PC-3 (cell line): ENCODE measurements at regions of chr6 and their contacts with region 1.

Region 1: DNA sequence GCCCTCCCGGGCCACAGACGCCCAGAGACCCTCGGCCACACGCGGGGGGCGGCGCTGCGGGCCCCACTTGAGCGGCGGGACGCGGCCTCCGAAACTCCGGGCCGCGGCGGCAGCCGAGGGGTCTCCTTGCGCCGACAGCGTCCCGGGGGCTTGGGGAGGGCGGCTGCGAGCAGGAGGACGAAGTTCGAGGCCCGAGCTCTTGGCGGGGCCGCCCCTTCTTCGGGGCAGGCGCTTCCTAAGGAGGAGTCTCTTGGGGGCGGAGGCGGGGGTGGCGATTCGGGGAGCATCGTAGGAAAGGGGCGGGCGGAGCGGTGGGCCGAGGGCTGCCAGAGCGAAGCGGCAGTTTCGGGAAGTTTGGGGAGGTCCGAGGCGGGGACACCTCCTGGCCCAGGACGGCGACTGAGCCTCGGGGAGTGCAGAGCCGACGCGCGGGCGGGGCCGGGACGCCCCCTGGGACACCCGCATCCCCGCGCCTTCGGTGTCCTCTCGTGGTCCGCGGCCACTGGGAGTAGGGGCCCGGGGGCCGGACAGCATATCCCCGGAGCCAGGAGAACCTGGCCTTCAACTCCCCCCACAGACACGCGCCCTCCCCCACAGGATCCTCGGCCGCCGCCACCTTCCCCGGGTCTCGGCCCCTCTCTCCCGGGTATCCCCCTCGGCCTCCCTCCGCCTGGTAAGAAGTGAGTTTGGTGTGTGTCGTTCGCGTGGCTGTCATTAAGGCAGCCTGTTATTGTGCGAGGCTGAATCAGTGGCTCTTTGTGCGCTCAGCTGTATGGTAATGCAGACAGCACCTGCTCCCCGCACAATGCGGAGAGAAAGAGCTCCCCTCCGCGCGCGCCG is 613 bp upstream of the DLL1 start:
- DNase-seq: peak; percentile 27
- ATAC-seq: peak; percentile 33
- H3K4me3 ChIP-seq: peak overlapping the region; percentile 61
- H3K27ac ChIP-seq: no peak overlapping the region
- H3K4me1 ChIP-seq: peaks cover 10% of the 10 kb centered on the region
- H3K27me3 ChIP-seq: peaks cover 50% of the 10 kb centered on the region
- CTCF ChIP-seq: no peak

Region 2: GRCh38 chr6:169789982-169790927 is 501.2 kb before region 1 on chr6:
- CTCF ChIA-PET with region 1: no interaction called
- POLR2A ChIA-PET with region 1: no interaction called
- intact Hi-C with region 1: loop called (anchors 5 kb)
- DNase-seq: peak; percentile 65
- ATAC-seq: peak; percentile 96
- H3K4me3 ChIP-seq: peak overlapping the region; percentile 75
- H3K27ac ChIP-seq: no peak overlapping the region
- H3K4me1 ChIP-seq: peaks cover 14% of the 10 kb centered on the region; the same call in 1 of the 2 replicates
- H3K27me3 ChIP-seq: no peaks in the 10 kb centered on the region
- CTCF ChIP-seq: peak; percentile 89

Region 3: GRCh38 chr6:169831450-169832246 is 459.8 kb before region 1 on chr6:
- CTCF ChIA-PET with region 1: interaction called, 12 read pairs
- POLR2A ChIA-PET with region 1: no interaction called
- intact Hi-C with region 1: loop called (anchors 1 kb)
- DNase-seq: peak; percentile 71
- ATAC-seq: peak; percentile 95
- H3K4me3 ChIP-seq: peak overlapping the region; percentile 39
- H3K27ac ChIP-seq: no peak overlapping the region
- H3K4me1 ChIP-seq: peaks cover 13% of the 10 kb centered on the region; the same call in 1 of the 2 replicates
- H3K27me3 ChIP-seq: peaks cover 6% of the 10 kb centered on the region; the same call in 1 of the 2 replicates
- CTCF ChIP-seq: peak; percentile 88

Region 4: DNA sequence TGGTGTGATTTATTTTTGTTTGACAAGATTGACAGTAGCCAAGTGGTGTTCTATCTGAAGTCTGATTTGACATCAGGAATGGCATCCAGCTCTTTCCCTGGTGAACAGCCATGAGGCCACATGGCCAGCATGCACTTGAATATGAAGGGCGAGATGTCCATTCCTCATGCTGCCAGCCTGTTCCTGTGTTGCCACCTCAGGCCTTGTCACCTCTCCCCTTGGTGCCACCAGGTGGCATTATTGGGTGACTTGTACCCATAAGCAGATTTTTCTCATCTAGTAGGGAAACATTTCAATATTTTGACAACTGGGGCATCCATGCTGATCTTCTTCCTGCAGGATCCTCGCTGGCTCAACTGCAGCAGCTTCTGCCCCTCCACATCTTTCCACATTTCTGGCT is 340.9 kb before region 1 on chr6:
- CTCF ChIA-PET with region 1: no interaction called
- POLR2A ChIA-PET with region 1: no interaction called
- intact Hi-C with region 1: loop called (anchors 1 kb)
- DNase-seq: peak; percentile 38
- ATAC-seq: no peak
- H3K4me3 ChIP-seq: no peak overlapping the region
- H3K27ac ChIP-seq: no peak overlapping the region
- H3K4me1 ChIP-seq: no peaks in the 10 kb centered on the region
- H3K27me3 ChIP-seq: no peaks in the 10 kb centered on the region
- CTCF ChIP-seq: peak; percentile 51

Region 5: DNA sequence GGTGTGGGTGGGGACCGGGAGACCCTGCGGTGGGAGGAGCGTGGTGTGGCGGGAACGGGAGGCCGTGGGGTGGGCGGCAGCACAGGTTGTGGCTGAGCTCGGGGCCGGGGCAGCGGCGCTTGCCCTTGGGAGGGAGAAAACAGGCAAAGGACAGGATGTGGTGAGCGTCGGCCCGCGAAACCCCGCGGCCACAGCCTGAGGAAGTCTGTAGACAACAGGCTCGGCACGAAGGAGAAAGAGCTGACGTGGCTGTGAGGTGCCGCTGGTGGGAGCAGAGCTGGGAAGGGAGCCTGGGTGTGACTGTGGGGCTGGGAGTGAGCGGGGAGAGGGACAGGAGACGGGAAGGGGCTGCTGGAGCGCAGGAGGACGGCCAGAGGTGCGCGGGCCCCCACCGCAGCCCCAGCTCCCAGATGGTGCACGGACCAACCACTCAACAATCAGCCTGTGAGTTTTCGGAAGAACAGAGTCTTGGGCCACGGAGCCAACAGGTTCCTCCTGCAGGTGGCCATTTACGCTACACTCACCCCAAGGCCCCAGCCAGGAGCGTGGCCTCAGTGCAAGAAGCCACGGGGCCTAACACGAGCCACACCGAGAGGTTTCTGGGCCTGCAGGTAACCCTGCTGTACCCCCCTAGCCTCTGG is 203.4 kb before region 1 on chr6:
- CTCF ChIA-PET with region 1: no interaction called
- POLR2A ChIA-PET with region 1: no interaction called
- intact Hi-C with region 1: no loop called
- DNase-seq: no peak
- ATAC-seq: no peak
- H3K4me3 ChIP-seq: no peak overlapping the region
- H3K27ac ChIP-seq: no peak overlapping the region
- H3K4me1 ChIP-seq: no peaks in the 10 kb centered on the region
- H3K27me3 ChIP-seq: no peaks in the 10 kb centered on the region
- CTCF ChIP-seq: no peak

Region 6: DNA sequence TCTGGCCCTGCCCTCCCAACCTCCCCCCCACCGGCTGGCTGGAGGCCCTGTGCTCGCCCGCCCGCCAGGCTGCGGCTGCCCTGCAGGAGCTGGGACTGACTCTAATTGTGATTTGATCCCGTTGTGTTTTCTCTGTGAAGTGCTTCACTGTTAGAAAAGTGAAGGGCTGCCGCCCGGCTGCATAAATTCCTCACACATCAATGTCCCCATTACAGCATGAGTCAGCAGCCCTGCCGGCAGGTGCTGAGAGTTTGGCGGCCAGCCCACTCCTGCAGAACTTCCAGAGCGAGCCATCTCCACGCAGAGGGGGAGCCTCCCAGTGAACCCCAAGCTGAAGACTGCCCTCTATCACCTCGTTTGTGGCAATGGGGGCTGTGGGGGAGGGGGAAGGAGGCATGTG is 138.5 kb before region 1 on chr6:
- CTCF ChIA-PET with region 1: no interaction called
- POLR2A ChIA-PET with region 1: no interaction called
- intact Hi-C with region 1: loop called (anchors 2 kb)
- DNase-seq: peak; percentile 70
- ATAC-seq: peak; percentile 82
- H3K4me3 ChIP-seq: no peak overlapping the region
- H3K27ac ChIP-seq: no peak overlapping the region
- H3K4me1 ChIP-seq: peaks cover 4% of the 10 kb centered on the region; the same call in 1 of the 2 replicates
- H3K27me3 ChIP-seq: no peaks in the 10 kb centered on the region
- CTCF ChIP-seq: no peak

Region 7: DNA sequence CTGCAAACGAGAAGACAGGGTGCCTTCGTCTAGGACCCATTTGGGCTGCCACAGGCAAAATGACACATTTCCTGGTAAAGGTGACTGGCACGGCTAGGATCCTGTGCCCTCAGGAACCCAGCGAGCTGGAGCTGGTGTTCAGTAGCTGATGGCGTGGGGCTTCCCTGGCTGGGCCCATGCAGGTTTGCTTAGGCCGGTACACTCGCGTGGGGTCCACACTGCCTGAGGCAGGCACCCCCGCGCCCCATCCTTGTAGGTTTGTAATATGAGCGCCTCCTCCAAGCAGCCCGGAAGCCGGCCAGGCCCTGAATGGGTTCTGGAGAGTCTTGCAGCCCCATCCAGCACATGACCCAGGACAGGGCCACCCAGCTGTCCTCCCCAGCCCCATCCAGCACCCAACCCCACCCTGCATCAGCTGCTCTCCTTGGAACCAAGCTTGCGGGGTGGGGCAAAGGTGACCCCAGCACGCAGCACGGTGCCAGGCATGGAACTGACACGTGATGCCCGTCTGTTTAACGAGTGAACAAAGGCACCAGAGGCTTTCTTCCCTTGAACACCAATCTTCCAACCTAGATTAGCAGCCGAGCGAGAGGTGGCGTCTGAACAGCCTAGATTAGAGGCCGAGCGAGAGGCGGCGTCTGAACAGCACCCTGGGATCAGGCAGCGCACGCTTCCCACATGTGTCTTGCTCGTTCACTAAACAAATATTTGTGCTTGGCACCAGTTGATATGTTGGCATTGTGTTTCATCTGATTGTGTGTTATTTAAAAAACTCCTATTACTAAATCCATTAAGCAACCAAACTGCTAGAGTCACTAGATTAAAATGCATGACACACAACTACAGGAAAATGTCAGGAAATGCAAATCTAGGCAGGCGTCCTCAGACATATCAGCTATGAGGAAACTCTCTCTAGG is 112.7 kb before region 1 on chr6:
- CTCF ChIA-PET with region 1: no interaction called
- POLR2A ChIA-PET with region 1: no interaction called
- intact Hi-C with region 1: loop called (anchors 2 kb)
- DNase-seq: peak; percentile 93
- ATAC-seq: peak; percentile 82
- H3K4me3 ChIP-seq: no peak overlapping the region
- H3K27ac ChIP-seq: peak overlapping the region; percentile 69
- H3K4me1 ChIP-seq: peaks cover 31% of the 10 kb centered on the region
- H3K27me3 ChIP-seq: no peaks in the 10 kb centered on the region
- CTCF ChIP-seq: no peak